IMR-90 (cell line): ENCODE measurements at regions of chr2 and their contacts with region 1.

Region 1: DNA sequence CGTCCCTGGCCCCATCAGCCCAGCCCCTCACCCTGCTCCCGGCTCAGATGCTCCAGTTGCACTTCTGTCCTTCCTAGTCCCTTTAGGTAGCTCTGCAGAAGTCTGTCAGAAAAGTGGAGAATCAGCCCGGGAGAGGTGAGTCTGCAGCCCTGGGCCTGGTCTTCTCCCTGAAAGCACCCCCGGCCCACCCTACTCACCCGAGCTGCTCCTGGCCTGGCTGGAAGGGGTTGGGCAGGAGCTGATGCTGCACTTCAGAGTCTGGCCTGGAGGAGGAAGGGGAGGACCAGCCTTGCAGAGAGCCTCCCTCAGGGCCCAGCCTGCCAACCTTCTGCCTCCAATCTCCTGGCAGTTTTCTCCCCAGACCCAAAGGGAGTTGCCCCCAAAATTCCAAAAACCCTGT is 15.8 kb downstream of the KHK start:
- DNase-seq: no peak
- ATAC-seq: no peak
- H3K4me3 ChIP-seq: no peak overlapping the region
- H3K27ac ChIP-seq: no peak overlapping the region
- H3K4me1 ChIP-seq: no peaks in the 10 kb centered on the region
- H3K27me3 ChIP-seq: peaks cover 38% of the 10 kb centered on the region
- CTCF ChIP-seq: no peak
- POLR2A ChIP-seq: no peak
- RAD21 ChIP-seq: no peak

Region 2: GRCh38 chr2:27175330-27175729 is 73.0 kb after region 1 on chr2:
- CTCF ChIA-PET with region 1: no interaction called
- POLR2A ChIA-PET with region 1: no interaction called
- dilution Hi-C with region 1: no loop called
- in situ Hi-C with region 1: no loop called
- intact Hi-C with region 1: no loop called
- DNase-seq: no peak
- ATAC-seq: peak; percentile 27; the same call in 1 of the 2 replicates
- H3K4me3 ChIP-seq: no peak overlapping the region
- H3K27ac ChIP-seq: no peak overlapping the region
- H3K4me1 ChIP-seq: no peaks in the 10 kb centered on the region
- H3K27me3 ChIP-seq: peaks cover 52% of the 10 kb centered on the region
- CTCF ChIP-seq: no peak
- POLR2A ChIP-seq: no peak
- RAD21 ChIP-seq: no peak

Region 3: DNA sequence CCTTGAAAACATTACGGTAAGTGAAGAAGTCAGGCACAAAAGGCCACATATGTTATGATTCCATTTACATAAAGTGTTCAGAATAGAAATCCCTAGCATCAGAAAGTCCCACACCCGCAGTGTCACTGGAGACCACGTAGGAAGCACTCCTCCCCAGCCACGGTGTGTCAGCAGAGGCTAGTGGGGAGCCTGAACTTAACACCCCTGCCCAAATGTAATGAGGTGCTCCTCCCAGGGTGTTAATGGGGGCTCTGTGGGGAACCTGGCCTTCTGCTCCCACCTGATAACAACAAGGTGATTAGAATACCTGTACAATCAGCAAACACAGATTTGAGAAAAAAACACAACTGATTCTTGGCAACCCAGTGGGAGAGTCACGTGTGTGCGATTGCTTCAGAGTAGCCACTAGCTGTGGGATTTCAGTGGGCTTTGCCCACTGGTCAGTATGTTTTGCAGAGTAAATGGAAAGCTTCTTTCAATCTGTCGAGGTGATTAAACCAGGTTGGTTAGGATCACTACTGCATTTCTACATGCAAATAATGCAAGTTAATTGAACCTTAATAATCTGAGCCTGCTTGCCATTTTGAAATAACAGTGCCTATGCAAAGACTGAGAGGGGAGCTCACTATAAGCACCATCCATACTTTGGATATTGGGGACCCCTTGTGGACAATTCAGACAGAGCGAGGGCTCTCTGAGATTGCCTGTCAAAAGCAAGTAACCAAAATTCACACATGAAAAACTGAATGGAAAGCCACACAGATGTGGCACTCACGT is 88.9 kb after region 1 on chr2:
- CTCF ChIA-PET with region 1: interaction called, 7 read pairs
- POLR2A ChIA-PET with region 1: no interaction called
- dilution Hi-C with region 1: no loop called
- in situ Hi-C with region 1: loop called (anchors 5 kb)
- intact Hi-C with region 1: loop called (anchors 1 kb)
- DNase-seq: peak; percentile 71
- ATAC-seq: peak; percentile 99
- H3K4me3 ChIP-seq: no peak overlapping the region
- H3K27ac ChIP-seq: no peak overlapping the region
- H3K4me1 ChIP-seq: peaks cover 2% of the 10 kb centered on the region; the same call in 1 of the 2 replicates
- H3K27me3 ChIP-seq: peaks cover 18% of the 10 kb centered on the region
- CTCF ChIP-seq: peak; percentile 83
- POLR2A ChIP-seq: no peak
- RAD21 ChIP-seq: peak; percentile 84

Region 4: GRCh38 chr2:27217217-27218121 is 115.1 kb after region 1 on chr2 and contains the start of gene CAD:
- CTCF ChIA-PET with region 1: no interaction called
- POLR2A ChIA-PET with region 1: no interaction called
- dilution Hi-C with region 1: no loop called
- in situ Hi-C with region 1: no loop called
- intact Hi-C with region 1: loop called (anchors 2 kb)
- DNase-seq: peak; percentile 75
- ATAC-seq: peak; percentile 92
- H3K4me3 ChIP-seq: peak within 1 kb of the TSS; percentile 64
- H3K27ac ChIP-seq: peak within 1 kb of the TSS; percentile 83
- H3K4me1 ChIP-seq: peaks cover 7% of the 10 kb centered on the region
- H3K27me3 ChIP-seq: no peaks in the 10 kb centered on the region
- CTCF ChIP-seq: peak; percentile 21; the same call in 1 of the 2 replicates
- POLR2A ChIP-seq: peak; percentile 44; the same call in 1 of the 2 replicates
- RAD21 ChIP-seq: peak; percentile 21; the same call in 1 of the 2 replicates
- total RNA-seq, gene CAD: 12.9 and 17.8 TPM in 2 replicates

Region 5: GRCh38 chr2:27281855-27282559 is 179.7 kb after region 1 on chr2 and contains the start of gene TRIM54:
- CTCF ChIA-PET with region 1: interaction called, 3 read pairs
- POLR2A ChIA-PET with region 1: no interaction called
- dilution Hi-C with region 1: no loop called
- in situ Hi-C with region 1: loop called (anchors 5 kb)
- intact Hi-C with region 1: loop called (anchors 2 kb)
- DNase-seq: peak; percentile 33
- ATAC-seq: 0 out of 2 replicates have a peak, but pooled peaks have one; percentile 13
- H3K4me3 ChIP-seq: no peak within 1 kb of the TSS
- H3K27ac ChIP-seq: no peak within 1 kb of the TSS
- H3K4me1 ChIP-seq: peaks cover 29% of the 10 kb centered on the region
- H3K27me3 ChIP-seq: peaks cover 10% of the 10 kb centered on the region
- CTCF ChIP-seq: no peak
- POLR2A ChIP-seq: no peak
- RAD21 ChIP-seq: no peak
- total RNA-seq, gene TRIM54: under 0.01 TPM in 1 of 2 replicates, not detected in the other

Region 6: GRCh38 chr2:27509326-27509725 is 407.0 kb after region 1 on chr2:
- CTCF ChIA-PET with region 1: no interaction called
- POLR2A ChIA-PET with region 1: no interaction called
- dilution Hi-C with region 1: no loop called
- in situ Hi-C with region 1: no loop called
- intact Hi-C with region 1: no loop called
- DNase-seq: peak; percentile 62
- ATAC-seq: peak; percentile 56; the same call in 1 of the 2 replicates
- H3K4me3 ChIP-seq: no peak overlapping the region
- H3K27ac ChIP-seq: no peak overlapping the region
- H3K4me1 ChIP-seq: no peaks in the 10 kb centered on the region
- H3K27me3 ChIP-seq: peaks cover 9% of the 10 kb centered on the region
- CTCF ChIP-seq: no peak
- POLR2A ChIP-seq: no peak
- RAD21 ChIP-seq: no peak